AG04449 (cell line): ENCODE measurements at regions of chr10 and their contacts with region 1.

Region 1: GRCh38 chr10:44310762-44311562 is 73.9 kb downstream of the CXCL12 start:
- DNase-seq: no peak
- H3K4me3 ChIP-seq: peak overlapping the region; percentile 23
- CTCF ChIP-seq: peak; percentile 91

Region 2: GRCh38 chr10:43671656-43672531 is 639.1 kb before region 1 on chr10:
- CTCF ChIA-PET with region 1: interaction called, 13 read pairs
- POLR2A ChIA-PET with region 1: no interaction called
- DNase-seq: no peak
- H3K4me3 ChIP-seq: no peak overlapping the region
- CTCF ChIP-seq: peak; percentile 56

Region 3: GRCh38 chr10:44300666-44301649 is 10.0 kb before region 1 on chr10:
- CTCF ChIA-PET with region 1: interaction called, 19 read pairs
- POLR2A ChIA-PET with region 1: no interaction called
- DNase-seq: peak; percentile 98
- H3K4me3 ChIP-seq: no peak overlapping the region
- CTCF ChIP-seq: no peak

Region 4: GRCh38 chr10:44325157-44325556 is 14.2 kb after region 1 on chr10:
- CTCF ChIA-PET with region 1: interaction called, 23 read pairs
- POLR2A ChIA-PET with region 1: no interaction called
- DNase-seq: no peak
- H3K4me3 ChIP-seq: no peak overlapping the region
- CTCF ChIP-seq: no peak

Region 5: DNA sequence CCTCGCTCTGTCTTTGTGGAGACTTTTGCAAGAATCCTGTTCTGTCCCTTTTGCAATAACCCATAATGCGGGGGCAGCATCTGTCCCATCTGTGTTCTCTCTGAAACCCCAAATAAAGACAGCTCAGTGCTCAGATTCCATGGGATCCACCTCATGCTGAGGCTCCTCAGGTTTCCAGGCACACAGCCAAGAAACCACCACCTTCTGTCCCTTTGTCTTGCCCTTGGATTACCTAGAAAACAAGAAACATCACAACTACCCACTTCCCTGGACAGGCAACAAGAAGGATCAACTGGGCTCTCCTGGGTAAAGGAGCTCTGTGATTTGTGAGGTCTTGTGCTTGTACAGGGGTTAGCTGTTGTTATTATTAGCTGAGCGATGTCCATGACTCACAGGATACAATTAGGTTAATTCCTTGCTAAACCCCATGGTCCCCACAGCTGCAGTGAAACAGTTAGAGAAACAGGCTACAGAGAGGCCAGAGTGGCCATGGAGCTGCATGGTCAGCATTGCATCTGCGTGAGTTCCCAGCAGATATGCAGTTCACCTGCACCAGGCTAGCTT is 23.7 kb after region 1 on chr10:
- CTCF ChIA-PET with region 1: interaction called, 18 read pairs
- POLR2A ChIA-PET with region 1: no interaction called
- DNase-seq: peak; percentile 33
- H3K4me3 ChIP-seq: no peak overlapping the region
- CTCF ChIP-seq: no peak

Region 6: GRCh38 chr10:44864637-44865288 is 553.8 kb after region 1 on chr10:
- CTCF ChIA-PET with region 1: interaction called, 22 read pairs
- POLR2A ChIA-PET with region 1: no interaction called
- DNase-seq: no peak
- H3K4me3 ChIP-seq: peak overlapping the region; percentile 69
- CTCF ChIP-seq: peak; percentile 95

Region 7: DNA sequence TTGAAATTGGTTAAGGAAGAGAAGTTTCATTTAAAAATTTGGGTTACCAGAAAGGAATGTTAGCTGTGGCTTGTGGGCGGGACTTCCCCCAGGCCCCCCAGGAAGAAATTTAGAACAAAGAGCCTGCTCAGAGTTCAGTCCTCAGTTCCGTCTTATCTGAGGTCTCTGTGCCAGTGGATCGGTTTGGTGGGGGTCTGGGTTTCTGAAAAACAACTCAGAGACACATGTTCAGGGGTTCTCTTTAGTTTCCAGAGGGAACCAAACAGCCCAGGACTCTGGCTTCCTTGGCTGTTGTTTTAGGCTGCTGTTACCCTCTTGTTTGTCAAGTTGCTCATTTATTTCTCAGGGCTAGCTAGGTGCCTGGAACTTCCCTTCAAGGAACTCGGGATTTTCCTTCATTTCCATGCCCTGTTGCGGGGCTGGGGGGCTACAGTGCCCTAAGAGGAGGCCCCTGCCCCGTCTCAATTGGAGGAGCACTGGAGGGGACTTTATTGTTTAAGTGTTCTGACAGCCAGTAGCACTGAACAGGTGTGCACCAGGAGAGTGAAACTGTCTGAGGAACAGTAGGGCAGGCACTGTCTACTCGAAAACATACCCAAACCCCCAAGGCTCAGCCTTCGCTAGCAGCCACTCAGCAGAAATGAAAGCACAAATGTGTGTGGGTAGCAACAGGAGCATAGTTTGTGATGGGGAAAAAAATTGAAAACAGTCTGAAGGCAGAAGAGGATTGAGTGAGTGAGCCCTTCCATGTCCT is 1122.9 kb after region 1 on chr10:
- CTCF ChIA-PET with region 1: no interaction called
- POLR2A ChIA-PET with region 1: no interaction called
- DNase-seq: no peak
- H3K4me3 ChIP-seq: no peak overlapping the region
- CTCF ChIP-seq: no peak